ENCODE measurements at regions of chr19 and their contacts with region 1.

Region 1: GRCh38 chr19:58059003-58059670 is at the start of gene ZNF135:
- DNase-seq: peak; percentile 64 to 90
- H3K4me3 ChIP-seq: peak within 1 kb of the TSS; percentile 38 to 63 (median 44)
- H3K27ac ChIP-seq: peak within 1 kb of the TSS; percentile 80
- H3K4me1 ChIP-seq: peaks cover 5 to 21% (median 14%) of the 10 kb centered on the region in 4 experiments
- H3K27me3 ChIP-seq: no peaks in the 10 kb centered on the region
- CTCF ChIP-seq: no peak
- EP300 ChIP-seq: no peak
- POLR2A ChIP-seq: peak in 1 of 2 experiments; percentile 91; a peak in 2 of 3 replicates
- RAD21 ChIP-seq: no peak; a peak in 1 of 4 replicates
- total RNA-seq, gene ZNF135: 5.2 and 5.3 TPM in 2 replicates

Region 2: GRCh38 chr19:58021541-58022282 is 37.4 kb before region 1 on chr19:
- CTCF ChIA-PET with region 1: interaction called, 13 read pairs
- POLR2A ChIA-PET with region 1: interaction called, 10 read pairs
- DNase-seq: peak in 1 of 2 experiments; percentile 72
- H3K4me3 ChIP-seq: no peak overlapping the region
- H3K27ac ChIP-seq: no peak overlapping the region
- H3K4me1 ChIP-seq: no peaks in the 10 kb centered on the region
- H3K27me3 ChIP-seq: no peaks in the 10 kb centered on the region; a peak in 3 of 7 replicates
- CTCF ChIP-seq: peak; percentile 46 to 84 (median 71)
- EP300 ChIP-seq: no peak
- POLR2A ChIP-seq: no peak
- RAD21 ChIP-seq: peak; percentile 88 to 91

Region 3: DNA sequence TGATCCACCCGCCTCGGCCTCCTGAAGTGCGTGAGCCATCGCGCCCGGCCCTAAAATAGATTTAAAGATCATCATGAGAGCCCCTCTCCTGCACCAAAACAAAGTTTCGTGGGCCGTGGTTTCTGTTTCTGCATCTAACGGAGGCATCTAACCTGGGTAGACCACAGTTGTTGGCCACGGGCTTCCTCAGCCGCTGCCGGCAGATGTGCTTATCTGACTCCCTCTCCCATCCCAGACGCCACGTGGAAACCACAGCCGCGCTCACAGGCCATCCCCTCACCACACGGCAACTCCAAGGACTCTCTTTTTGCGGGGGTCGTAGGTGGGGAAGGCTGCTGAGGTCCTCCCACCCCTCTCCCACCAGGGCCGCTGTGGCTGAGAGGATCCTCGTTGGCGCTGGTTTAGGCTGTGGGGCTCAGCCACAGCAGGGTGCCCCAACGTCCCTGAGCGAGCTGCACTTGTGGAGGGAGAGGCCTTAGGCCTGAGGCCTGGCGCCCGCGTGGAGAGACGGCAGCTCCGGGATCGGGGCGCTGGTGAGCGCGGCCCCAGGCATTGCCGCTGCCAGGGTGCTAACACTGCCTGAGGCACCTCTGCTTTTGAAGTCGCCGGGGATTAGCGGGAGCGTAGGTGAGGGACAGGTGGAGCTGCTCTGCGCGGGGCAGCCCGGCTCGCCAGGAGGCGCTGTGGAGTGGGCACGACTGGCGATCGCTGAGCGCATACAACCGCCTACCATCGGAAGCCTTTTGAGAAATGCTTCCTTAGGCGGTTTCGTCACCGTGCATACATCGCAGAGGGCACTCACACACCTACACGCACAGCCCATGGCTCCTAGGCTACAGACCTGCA is 16.4 kb before region 1 on chr19:
- CTCF ChIA-PET with region 1: interaction called, 113 read pairs
- POLR2A ChIA-PET with region 1: interaction called, 45 read pairs
- DNase-seq: peak; percentile 84 to 87
- H3K4me3 ChIP-seq: peak overlapping the region in 2 of 4 experiments; percentile 4 to 44; a peak in 1 of 8 replicates
- H3K27ac ChIP-seq: no peak overlapping the region
- H3K4me1 ChIP-seq: peaks cover 0 to 17% (median 11%) of the 10 kb centered on the region in 4 experiments; a peak in 6 of 7 replicates
- H3K27me3 ChIP-seq: peaks cover 0 to 5% (median 4%) of the 10 kb centered on the region in 4 experiments; a peak in 3 of 7 replicates
- CTCF ChIP-seq: peak; percentile 87 to 97 (median 91)
- EP300 ChIP-seq: no peak; a peak in 1 of 3 replicates
- POLR2A ChIP-seq: no peak
- RAD21 ChIP-seq: peak; percentile 75 to 79

Region 4: DNA sequence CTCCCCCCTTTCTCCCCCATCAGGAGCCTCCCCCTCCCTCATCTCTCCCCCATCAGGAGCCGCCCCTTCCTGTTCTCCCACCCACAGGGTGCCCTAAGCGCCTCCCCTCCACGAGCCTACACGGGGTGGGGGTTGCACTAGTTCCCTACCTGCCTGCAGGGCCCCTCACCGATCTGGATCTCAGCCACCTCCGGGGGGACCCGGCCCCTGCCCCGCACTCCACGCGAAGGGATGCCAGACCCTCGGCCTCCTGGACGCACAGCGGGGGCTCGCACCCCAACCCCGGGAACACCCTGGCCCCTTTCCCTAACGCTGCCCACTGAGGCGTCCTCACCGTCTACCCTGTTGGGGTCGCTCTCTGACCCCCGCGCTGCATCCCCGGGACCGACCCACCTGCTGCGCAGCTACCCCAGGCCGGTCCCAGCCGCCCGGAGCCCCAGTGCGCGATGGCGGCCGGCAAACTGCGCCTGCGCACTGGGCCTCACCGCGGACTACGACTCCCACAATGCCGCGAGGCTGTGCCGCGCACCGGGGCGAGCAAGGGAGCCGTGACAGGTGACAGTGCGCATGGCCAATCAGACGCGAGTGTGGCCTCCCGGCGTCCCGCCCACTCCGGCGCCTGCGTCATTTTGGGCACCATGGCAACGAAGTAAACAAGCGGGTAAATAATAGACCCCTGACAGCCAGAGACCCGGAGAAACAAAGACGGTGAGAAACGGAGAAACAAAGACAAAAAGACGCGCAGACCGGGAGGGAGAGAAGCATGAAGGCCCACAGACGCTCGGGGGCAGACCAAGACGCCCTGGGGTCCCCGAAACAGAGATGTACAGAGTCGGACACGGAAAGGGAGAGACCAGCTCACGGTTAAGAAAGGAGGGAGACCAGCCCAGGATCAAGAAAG is 38.9 kb after region 1 on chr19 and contains the start of gene ZSCAN18:
- CTCF ChIA-PET with region 1: interaction called, 40 read pairs
- POLR2A ChIA-PET with region 1: interaction called, 23 read pairs
- DNase-seq: peak; percentile 94 to 100
- H3K4me3 ChIP-seq: peak within 1 kb of the TSS; percentile 82 to 99 (median 97)
- H3K27ac ChIP-seq: peak within 1 kb of the TSS; percentile 100
- H3K4me1 ChIP-seq: peaks cover 0 to 5% (median 4%) of the 10 kb centered on the region in 4 experiments; a peak in 5 of 7 replicates
- H3K27me3 ChIP-seq: no peaks in the 10 kb centered on the region
- CTCF ChIP-seq: no peak; a peak in 1 of 4 replicates
- EP300 ChIP-seq: peak in 1 of 2 experiments; percentile 96; a peak in 1 of 3 replicates
- POLR2A ChIP-seq: peak in 1 of 2 experiments; percentile 46; a peak in 2 of 3 replicates
- RAD21 ChIP-seq: no peak; a peak in 1 of 4 replicates
- total RNA-seq, gene ZSCAN18: 37.0 and 37.6 TPM in 2 replicates

Region 5: GRCh38 chr19:58170860-58171259 is 111.7 kb after region 1 on chr19:
- CTCF ChIA-PET with region 1: no interaction called
- POLR2A ChIA-PET with region 1: no interaction called
- DNase-seq: no peak
- H3K4me3 ChIP-seq: no peak overlapping the region
- H3K27ac ChIP-seq: no peak overlapping the region
- H3K4me1 ChIP-seq: no peaks in the 10 kb centered on the region
- H3K27me3 ChIP-seq: no peaks in the 10 kb centered on the region
- CTCF ChIP-seq: no peak
- EP300 ChIP-seq: no peak
- POLR2A ChIP-seq: no peak
- RAD21 ChIP-seq: no peak

Measured in H1 (cell line).